RWPE1 (cell line): ENCODE measurements at regions of chr17 and their contacts with region 1.

Region 1: DNA sequence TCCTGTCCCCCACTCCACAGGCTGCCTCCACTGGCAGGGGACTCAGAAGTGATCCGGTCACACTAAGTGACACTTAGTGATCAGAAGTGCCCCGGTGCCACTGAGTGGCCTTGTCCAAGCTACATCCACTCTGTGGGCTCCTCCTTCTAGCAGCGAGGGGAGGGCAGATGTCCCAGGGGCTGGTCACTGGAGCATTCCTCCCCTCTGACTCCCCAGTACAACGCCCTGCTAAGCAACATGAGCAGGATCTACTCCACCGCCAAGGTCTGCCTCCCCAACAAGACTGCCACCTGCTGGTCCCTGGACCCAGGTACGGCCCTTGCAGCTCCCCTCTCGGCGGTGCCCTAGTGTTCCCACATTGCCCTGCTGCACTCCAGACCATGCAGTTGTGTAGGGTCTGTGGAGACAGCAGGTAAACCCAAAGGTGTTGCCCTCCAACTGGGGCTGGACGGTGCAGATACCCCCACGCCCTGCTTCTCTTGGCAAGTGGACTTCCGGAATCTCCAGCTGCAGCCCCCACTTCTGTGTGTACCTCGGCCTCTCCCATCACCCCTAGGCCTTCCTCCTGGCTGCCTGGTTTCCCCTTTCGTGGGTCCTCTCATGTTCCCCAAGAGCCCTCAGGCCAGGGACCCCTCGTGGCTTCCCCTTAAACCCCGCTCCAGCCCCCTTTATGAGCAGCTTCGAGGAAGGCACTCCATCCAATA is 2.1 kb downstream of the ACE start:
- DNase-seq: peak; percentile 96
- H3K27ac ChIP-seq: no peak overlapping the region
- CTCF ChIP-seq: peak; percentile 80

Region 2: GRCh38 chr17:63434876-63435684 is 43.9 kb before region 1 on chr17:
- CTCF ChIA-PET with region 1: interaction called, 52 read pairs
- POLR2A ChIA-PET with region 1: interaction called, 3 read pairs
- DNase-seq: peak; percentile 80
- H3K27ac ChIP-seq: peak overlapping the region; percentile 87
- CTCF ChIP-seq: peak; percentile 48

Region 3: DNA sequence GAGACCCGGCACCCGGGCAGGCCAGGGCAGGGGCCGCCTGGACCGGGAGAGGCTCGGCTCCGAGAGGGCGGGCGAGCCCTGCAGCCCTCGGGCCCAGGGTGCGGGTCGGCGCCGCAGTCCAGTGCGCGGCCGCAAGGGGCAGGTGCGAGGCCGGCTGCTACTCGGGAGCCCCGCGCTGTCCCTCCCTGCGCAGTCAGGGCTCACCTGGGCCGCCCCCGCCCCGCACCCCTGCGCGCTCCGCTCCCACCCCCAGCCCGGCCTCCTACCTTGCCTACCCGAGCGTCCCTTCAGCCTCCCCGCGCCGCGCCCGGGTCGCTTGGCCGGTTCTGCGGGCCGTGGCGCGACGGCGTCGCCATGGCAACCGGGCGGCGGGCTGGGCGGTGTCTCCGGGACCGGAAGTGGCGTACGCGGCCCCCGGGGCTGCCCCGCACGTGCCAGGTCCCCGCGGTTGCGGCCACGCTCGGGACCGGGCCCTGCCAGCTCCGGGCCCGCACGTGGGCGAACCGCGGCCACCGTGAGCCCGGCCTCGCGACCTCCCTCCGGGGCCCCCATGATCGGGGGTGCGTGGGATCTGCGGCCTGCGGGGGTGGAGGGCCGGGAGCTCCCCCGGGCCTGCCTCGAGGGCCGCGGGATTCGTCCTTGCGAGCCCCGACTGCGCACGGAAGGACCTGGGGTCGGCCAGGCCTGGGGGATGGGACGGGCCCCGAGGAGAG is 32.8 kb before region 1 on chr17 and contains the start of gene CYB561:
- CTCF ChIA-PET with region 1: interaction called, 12 read pairs
- POLR2A ChIA-PET with region 1: no interaction called
- DNase-seq: peak; percentile 84
- H3K27ac ChIP-seq: peak within 1 kb of the TSS; percentile 78
- CTCF ChIP-seq: peak; percentile 84

Region 4: GRCh38 chr17:63514974-63515373 is 36.0 kb after region 1 on chr17:
- CTCF ChIA-PET with region 1: no interaction called
- POLR2A ChIA-PET with region 1: no interaction called
- DNase-seq: no peak
- H3K27ac ChIP-seq: no peak overlapping the region
- CTCF ChIP-seq: no peak